ENCODE measurements at regions of chr7 and their contacts with region 1.

Region 1: DNA sequence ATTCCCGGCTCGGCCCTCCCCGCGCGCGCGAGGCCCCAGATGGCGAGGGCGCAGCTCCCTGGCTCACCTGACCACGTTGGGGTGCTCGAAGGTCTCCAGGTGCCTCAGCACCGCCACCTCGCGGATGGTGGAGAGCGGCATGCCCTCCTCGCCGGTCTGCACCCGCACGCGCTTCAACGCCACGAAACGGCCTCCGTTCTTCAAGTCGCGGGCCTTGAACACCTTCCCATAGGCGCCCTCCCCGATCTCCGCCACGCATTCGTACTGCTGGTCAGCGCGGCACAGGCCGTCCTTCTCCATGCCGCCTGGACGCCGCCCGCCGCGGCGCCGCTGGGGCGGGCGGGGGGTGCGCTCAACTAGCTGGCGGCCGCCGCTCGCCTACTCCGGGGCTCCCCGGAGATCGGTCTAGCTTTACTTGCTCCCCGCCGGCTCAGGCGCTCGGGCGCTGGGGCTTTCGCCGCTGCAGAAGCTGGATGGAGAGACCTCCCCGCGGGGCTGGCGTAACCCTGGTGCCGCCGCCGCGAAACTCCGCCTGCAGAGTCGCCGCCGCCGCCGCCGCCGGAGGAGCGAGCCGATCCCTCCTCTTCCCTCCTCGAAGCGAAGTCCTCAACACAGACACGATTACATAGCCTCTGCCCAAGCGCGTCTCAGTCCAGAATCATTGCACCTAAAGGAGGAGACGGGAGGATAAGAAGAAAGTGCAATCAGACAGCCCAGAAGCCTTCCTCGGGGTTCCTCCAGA is 3.2 kb downstream of the CDK6 start:
- DNase-seq: peak; percentile 85
- H3K4me3 ChIP-seq: peak overlapping the region; percentile 90
- H3K27ac ChIP-seq: peak overlapping the region; percentile 96
- H3K4me1 ChIP-seq: peaks cover 88% of the 10 kb centered on the region
- H3K27me3 ChIP-seq: no peaks in the 10 kb centered on the region
- CTCF ChIP-seq: peak; percentile 90

Region 2: DNA sequence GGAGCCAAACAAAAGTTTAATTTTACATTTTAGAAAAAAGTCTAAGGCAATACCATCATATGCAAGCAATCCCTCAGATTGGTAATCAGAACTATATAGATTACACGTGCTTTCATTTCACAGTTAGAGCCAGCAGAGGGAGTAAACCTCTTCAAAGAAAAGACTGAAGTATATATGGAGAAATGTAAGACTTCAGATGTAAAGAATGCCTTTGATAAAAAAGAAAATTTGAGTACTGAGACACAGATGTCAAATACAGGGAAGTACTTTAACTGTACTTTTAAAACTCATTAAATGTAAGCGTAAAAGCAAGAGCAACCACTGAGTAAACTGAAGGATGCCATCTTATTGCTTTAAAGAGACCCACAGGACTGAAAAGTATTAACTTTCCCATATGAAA is 141.6 kb before region 1 on chr7:
- intact Hi-C with region 1: loop called (anchors 5 kb)
- DNase-seq: no peak
- H3K4me3 ChIP-seq: no peak overlapping the region
- H3K27ac ChIP-seq: peak overlapping the region; percentile 10
- H3K4me1 ChIP-seq: peaks cover 24% of the 10 kb centered on the region
- H3K27me3 ChIP-seq: no peaks in the 10 kb centered on the region
- CTCF ChIP-seq: peak; percentile 71